PC-9 (cell line): ENCODE measurements at regions of chr2 and their contacts with region 1.

Region 1: GRCh38 chr2:70086838-70087701 is at the start of gene PCBP1:
- DNase-seq: peak; percentile 85 to 90
- H3K4me3 ChIP-seq: peak within 1 kb of the TSS; percentile 98
- H3K27ac ChIP-seq: peak within 1 kb of the TSS; percentile 100
- H3K4me1 ChIP-seq: peaks cover 43% of the 10 kb centered on the region
- H3K27me3 ChIP-seq: no peaks in the 10 kb centered on the region
- CTCF ChIP-seq: no peak
- total RNA-seq, gene PCBP1: 148 and 227 TPM in 2 replicates

Region 2: GRCh38 chr2:70104231-70105111 is 17.4 kb after region 1 on chr2:
- CTCF ChIA-PET with region 1: no interaction called
- POLR2A ChIA-PET with region 1: interaction called, 3 read pairs
- intact Hi-C with region 1: loop called (anchors 1 kb)
- DNase-seq: no peak
- H3K4me3 ChIP-seq: no peak overlapping the region
- H3K27ac ChIP-seq: no peak overlapping the region
- H3K4me1 ChIP-seq: peaks cover 15% of the 10 kb centered on the region
- H3K27me3 ChIP-seq: no peaks in the 10 kb centered on the region
- CTCF ChIP-seq: no peak

Region 3: GRCh38 chr2:70124983-70125480 is 38.0 kb after region 1 on chr2:
- CTCF ChIA-PET with region 1: no interaction called
- POLR2A ChIA-PET with region 1: interaction called, 4 read pairs
- intact Hi-C with region 1: loop called (anchors 1 kb)
- DNase-seq: no peak
- H3K4me3 ChIP-seq: peak overlapping the region; percentile 95
- H3K27ac ChIP-seq: peak overlapping the region; percentile 89
- H3K4me1 ChIP-seq: peaks cover 32% of the 10 kb centered on the region
- H3K27me3 ChIP-seq: no peaks in the 10 kb centered on the region
- CTCF ChIP-seq: no peak

Region 4: DNA sequence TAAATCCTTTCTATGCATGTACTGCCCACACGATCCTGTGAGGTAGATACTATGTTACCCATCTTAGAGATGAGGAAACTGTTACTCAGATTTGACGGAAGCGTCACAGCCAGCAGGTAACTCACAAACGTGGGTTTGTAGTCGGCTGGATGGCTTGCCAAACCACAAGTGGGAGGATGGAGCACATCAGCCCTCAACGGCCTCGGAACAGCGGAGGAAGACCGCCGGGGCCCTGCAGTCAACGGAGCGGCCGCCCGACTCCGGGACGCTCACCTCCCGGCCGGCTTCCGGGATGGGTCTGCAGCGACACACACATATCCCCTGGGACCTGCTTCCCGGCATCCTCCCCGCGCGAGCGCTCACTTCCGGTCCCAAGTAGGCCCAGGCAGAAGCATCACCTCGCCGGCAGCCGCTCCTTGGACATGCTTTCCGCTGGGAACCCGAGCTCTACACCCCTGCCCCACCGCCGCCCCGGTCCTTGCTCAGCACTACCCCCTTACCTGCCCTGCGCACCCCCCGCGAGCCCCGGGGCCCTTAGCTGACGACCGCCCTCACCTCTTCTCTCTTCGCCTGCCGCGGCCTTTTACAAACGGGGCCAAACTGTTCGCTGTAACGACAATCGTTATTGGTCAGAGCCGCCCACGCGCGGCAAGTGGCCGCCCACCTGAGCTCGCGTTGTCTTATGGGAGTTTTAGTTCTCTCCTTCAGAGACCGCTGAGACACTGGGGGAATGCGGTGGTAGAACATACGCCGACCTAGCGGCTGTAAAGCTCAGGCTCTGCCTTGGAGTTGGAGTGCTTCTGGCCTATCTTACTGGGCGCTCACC is 103.6 kb after region 1 on chr2 and contains the start of gene C2orf42:
- CTCF ChIA-PET with region 1: no interaction called
- POLR2A ChIA-PET with region 1: interaction called, 8 read pairs
- intact Hi-C with region 1: loop called (anchors 5 kb)
- DNase-seq: peak; percentile 91 to 95
- H3K4me3 ChIP-seq: peak within 1 kb of the TSS; percentile 85
- H3K27ac ChIP-seq: peak within 1 kb of the TSS; percentile 78
- H3K4me1 ChIP-seq: peaks cover 16% of the 10 kb centered on the region
- H3K27me3 ChIP-seq: no peaks in the 10 kb centered on the region
- CTCF ChIP-seq: no peak
- total RNA-seq, gene C2orf42: 12.7 and 14.3 TPM in 2 replicates